ENCODE measurements at regions of chr15 and their contacts with region 1.

Region 1: GRCh38 chr15:35289024-35289617 is 204.0 kb upstream of the NANOGP8 start:
- DNase-seq: no peak
- H3K4me3 ChIP-seq: no peak overlapping the region
- H3K27ac ChIP-seq: no peak overlapping the region
- H3K4me1 ChIP-seq: peaks cover 0 to 4% (median 0%) of the 10 kb centered on the region in 4 experiments; a peak in 4 of 7 replicates
- H3K27me3 ChIP-seq: no peaks in the 10 kb centered on the region
- CTCF ChIP-seq: peak in 2 of 3 experiments; percentile 63 to 79; a peak in 3 of 4 replicates
- EP300 ChIP-seq: no peak
- POLR2A ChIP-seq: no peak
- RAD21 ChIP-seq: peak; percentile 92 to 94

Region 2: DNA sequence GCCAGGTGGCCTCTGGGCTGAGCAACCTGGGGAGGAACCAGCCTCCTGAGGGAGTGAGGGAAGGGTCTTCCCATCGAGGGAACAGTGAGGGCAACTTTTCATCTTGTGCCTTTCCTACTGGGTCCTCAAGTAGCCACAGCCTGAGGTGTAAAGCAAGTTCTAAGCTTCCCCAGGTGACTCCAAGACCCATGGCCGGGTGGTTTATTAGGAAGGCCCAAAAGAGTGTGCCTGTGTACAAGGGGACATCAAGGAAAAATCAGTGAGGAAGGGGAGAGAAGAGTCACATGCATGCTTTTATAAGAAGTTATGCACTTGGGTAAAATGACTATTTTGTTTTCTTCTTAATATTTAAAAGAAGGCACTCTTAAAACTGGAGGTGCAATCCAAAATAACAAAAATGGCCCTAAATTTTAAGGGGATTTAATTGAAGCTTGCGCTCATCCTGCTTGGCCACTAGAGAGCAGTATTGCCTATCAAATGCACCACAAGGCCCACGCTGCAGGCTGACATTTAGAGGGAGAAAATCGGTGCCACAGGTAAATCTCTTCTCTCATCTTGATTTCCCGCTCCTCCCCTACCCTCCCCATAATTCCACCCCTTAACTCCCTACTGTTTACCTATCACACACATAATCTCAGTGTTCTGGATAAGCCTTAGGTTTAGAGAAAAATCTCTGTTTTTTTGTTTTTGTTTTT is 210.8 kb before region 1 on chr15:
- CTCF ChIA-PET with region 1: interaction called, 19 read pairs
- POLR2A ChIA-PET with region 1: no interaction called
- DNase-seq: no peak
- H3K4me3 ChIP-seq: no peak overlapping the region
- H3K27ac ChIP-seq: 0 out of 2 replicates have a peak overlapping the region, but pooled peaks have one; percentile 4
- H3K4me1 ChIP-seq: no peaks in the 10 kb centered on the region
- H3K27me3 ChIP-seq: no peaks in the 10 kb centered on the region; a peak in 1 of 7 replicates
- CTCF ChIP-seq: peak; percentile 53 to 86 (median 82)
- EP300 ChIP-seq: no peak
- POLR2A ChIP-seq: no peak
- RAD21 ChIP-seq: peak; percentile 98 to 99

Region 3: DNA sequence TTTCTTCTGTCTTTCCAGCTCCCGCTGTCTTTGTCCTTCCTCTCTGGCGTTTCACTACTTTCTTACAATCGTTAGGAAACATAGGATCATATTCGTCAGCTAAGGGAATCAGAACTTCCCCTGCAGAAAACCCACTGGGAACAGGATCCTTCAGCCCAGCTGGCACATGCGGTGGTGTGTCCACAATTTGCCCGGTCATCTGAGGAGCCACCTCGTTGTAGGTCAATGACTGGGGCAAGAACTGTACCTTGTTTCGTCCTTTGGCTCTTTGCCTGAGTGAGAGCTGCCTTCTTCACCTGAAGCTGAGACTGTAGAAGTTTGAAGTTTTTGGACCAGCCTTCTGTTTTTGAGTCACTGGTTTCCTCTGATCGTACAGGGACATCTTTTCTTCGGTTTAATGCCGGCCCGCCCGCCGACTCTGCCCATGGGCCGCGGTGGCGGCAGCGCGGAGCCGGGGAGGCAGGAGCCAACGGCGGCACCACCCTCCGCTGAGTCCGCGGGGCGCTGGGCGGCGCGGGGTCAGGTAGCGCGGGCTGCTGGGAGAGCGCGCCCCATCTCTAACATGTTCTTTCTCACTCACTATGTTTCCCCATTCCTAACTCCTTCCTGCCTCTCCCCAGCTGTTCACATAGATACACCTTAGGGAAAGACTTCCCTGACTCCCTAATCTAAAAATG is 10.1 kb after region 1 on chr15:
- CTCF ChIA-PET with region 1: interaction called, 10 read pairs
- POLR2A ChIA-PET with region 1: no interaction called
- DNase-seq: no peak
- H3K4me3 ChIP-seq: no peak overlapping the region
- H3K27ac ChIP-seq: no peak overlapping the region
- H3K4me1 ChIP-seq: no peaks in the 10 kb centered on the region
- H3K27me3 ChIP-seq: no peaks in the 10 kb centered on the region
- CTCF ChIP-seq: no peak
- EP300 ChIP-seq: no peak
- POLR2A ChIP-seq: no peak
- RAD21 ChIP-seq: no peak

Region 4: DNA sequence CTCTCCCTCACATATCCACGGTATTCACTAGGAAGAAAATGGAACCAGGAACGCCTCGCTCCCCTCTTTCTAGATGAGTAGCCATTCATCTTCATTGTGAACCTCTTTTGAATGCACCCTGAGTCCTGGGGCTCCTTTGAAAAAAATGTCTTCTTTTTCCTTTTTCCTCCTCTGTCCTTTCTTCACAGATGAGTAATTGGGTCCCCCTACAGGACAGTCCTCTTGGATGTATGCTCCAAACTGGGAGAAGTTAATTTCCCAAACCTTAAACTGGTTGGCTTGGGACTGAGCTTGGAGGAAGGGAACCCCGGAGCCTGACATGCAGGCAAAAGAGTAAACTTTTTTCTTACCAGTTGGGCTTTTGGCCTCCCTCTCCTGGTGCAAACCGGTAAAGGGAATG is 148.0 kb after region 1 on chr15:
- CTCF ChIA-PET with region 1: interaction called, 156 read pairs
- POLR2A ChIA-PET with region 1: no interaction called
- DNase-seq: no peak
- H3K4me3 ChIP-seq: no peak overlapping the region
- H3K27ac ChIP-seq: no peak overlapping the region; the same call in 1 of the 2 replicates
- H3K4me1 ChIP-seq: peaks cover 0 to 8% (median 4%) of the 10 kb centered on the region in 4 experiments; a peak in 3 of 7 replicates
- H3K27me3 ChIP-seq: no peaks in the 10 kb centered on the region
- CTCF ChIP-seq: peak in 2 of 3 experiments; percentile 14 to 28; a peak in 1 of 4 replicates
- EP300 ChIP-seq: no peak
- POLR2A ChIP-seq: no peak
- RAD21 ChIP-seq: peak; percentile 48 to 59

Measured in H1 (cell line).